ENCODE measurements at regions of chr6 and their contacts with region 1.

Region 1: GRCh38 chr6:166156942-166157341 is 10.7 kb downstream of the TBXT start:
- H3K4me3 Mint-ChIP-seq: no peak overlapping the region
- H3K27ac Mint-ChIP-seq: no peak overlapping the region
- H3K4me1 Mint-ChIP-seq: no peaks in the 10 kb centered on the region
- H3K27me3 Mint-ChIP-seq: peaks cover 5% of the 10 kb centered on the region

Region 2: GRCh38 chr6:165562421-165563090 is 594.4 kb before region 1 on chr6:
- intact Hi-C with region 1: no loop called
- H3K4me3 Mint-ChIP-seq: no peak overlapping the region
- H3K27ac Mint-ChIP-seq: no peak overlapping the region
- H3K4me1 Mint-ChIP-seq: no peaks in the 10 kb centered on the region
- H3K27me3 Mint-ChIP-seq: no peaks in the 10 kb centered on the region

Region 3: GRCh38 chr6:166244353-166245045 is 87.6 kb after region 1 on chr6:
- intact Hi-C with region 1: no loop called
- H3K4me3 Mint-ChIP-seq: peak overlapping the region; percentile 41
- H3K27ac Mint-ChIP-seq: peak overlapping the region; percentile 12
- H3K4me1 Mint-ChIP-seq: peaks cover 10% of the 10 kb centered on the region
- H3K27me3 Mint-ChIP-seq: peaks cover 8% of the 10 kb centered on the region

Region 4: DNA sequence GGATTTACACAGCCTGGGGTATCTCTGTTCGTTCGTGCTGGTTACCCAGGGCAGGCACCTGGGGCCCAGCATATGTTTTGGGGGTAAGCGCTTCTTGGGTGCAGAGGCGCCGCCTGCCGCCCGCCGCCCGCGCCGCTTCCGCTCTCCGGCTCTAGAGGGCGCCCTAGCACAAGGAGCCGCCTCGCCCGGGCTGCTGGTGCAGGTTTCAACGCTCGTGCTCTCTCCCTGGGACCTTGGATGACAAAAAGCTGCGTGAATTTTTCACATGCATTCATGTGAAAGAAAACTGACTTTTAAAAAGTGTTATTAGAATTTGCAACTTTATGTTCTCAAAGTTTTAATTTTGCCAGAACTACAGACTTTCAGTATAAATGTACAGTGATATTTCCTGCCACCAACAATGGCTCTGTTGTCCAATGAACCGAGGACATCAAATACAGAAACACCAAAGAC is 118.8 kb after region 1 on chr6:
- intact Hi-C with region 1: loop called (anchors 2 kb)
- H3K4me3 Mint-ChIP-seq: no peak overlapping the region
- H3K27ac Mint-ChIP-seq: peak overlapping the region; percentile 71
- H3K4me1 Mint-ChIP-seq: peaks cover 5% of the 10 kb centered on the region
- H3K27me3 Mint-ChIP-seq: peaks cover 5% of the 10 kb centered on the region